HepG2 (cell line): ENCODE measurements at regions of chr6 and their contacts with region 1.

Region 1: DNA sequence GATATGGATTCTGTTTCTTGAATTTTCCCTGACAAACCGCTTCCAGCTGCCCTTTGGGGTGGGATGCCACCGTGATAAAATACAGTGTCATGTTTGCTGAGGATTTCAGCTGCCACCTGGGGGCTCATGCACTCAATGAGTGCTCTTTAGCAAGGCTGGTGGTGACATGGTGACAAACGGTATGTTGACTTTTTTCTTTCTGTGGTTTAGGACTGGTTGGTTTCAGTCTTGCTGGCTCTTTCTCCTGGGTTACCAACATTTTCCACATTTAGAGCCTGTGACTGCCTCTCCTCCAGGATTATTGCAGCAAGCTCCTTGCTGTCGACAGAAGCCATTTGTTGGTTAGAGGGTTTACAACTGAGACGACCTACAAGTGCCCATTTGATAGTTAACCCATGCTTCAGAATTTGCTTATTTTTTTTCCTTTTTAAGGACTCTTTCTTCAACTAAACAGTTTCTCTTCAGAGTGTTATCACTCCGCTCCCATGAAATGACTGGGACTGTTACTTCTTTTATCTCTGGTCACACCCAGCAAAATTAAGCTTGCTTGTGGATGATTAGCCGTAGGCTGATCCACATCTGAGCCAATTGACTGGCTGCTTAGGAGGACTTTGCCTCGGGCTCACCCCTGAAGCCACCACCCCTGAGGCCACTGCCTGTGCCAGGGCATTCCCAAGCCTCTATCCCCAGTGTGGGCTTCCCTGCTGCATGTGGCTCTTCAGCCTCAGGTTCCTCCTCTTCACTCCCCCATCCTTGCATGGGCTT is 48.4 kb upstream of the CDYL start:
- DNase-seq: peak; percentile 69
- ATAC-seq: peak; percentile 85
- H3K4me3 ChIP-seq: no peak overlapping the region
- H3K27ac ChIP-seq: no peak overlapping the region
- H3K4me1 ChIP-seq: peaks cover 15% of the 10 kb centered on the region
- H3K27me3 ChIP-seq: peaks cover 0 to 5% of the 10 kb centered on the region in 2 experiments; a peak in 3 of 5 replicates
- CTCF ChIP-seq: peak; percentile 42
- EP300 ChIP-seq: no peak
- POLR2A ChIP-seq: no peak
- RAD21 ChIP-seq: no peak

Region 2: GRCh38 chr6:4848382-4849068 is 120.7 kb after region 1 on chr6:
- CTCF ChIA-PET with region 1: no interaction called
- POLR2A ChIA-PET with region 1: no interaction called
- in situ Hi-C with region 1: no loop called
- intact Hi-C with region 1: loop called (anchors 5 kb)
- DNase-seq: peak; percentile 62
- ATAC-seq: peak; percentile 93
- H3K4me3 ChIP-seq: no peak overlapping the region
- H3K27ac ChIP-seq: no peak overlapping the region
- H3K4me1 ChIP-seq: peaks cover 10% of the 10 kb centered on the region
- H3K27me3 ChIP-seq: no peaks in the 10 kb centered on the region
- CTCF ChIP-seq: peak; percentile 81
- EP300 ChIP-seq: no peak
- POLR2A ChIP-seq: no peak
- RAD21 ChIP-seq: peak; percentile 79

Region 3: DNA sequence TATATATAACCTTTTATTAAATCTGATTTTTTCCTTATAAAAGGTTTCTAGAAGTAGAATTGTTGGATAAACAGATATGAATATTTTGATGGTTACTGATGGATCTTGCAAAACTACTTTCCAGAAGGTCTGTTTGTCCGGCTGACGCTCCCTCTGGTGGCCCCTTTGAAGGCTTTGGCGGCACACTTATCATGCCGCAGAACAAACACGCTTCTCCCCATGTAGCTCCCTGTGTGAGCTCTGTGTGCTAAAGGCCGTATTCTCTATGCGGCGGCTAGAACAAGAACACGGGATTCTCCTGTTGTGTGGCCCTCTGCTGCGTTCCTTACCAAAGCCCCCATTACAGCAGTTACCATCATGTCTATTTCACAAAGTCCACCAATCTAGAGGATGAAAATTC is 387.3 kb after region 1 on chr6:
- CTCF ChIA-PET with region 1: no interaction called
- POLR2A ChIA-PET with region 1: no interaction called
- in situ Hi-C with region 1: no loop called
- intact Hi-C with region 1: no loop called
- DNase-seq: peak; percentile 91
- ATAC-seq: peak; percentile 94
- H3K4me3 ChIP-seq: no peak overlapping the region
- H3K27ac ChIP-seq: peak overlapping the region; percentile 10
- H3K4me1 ChIP-seq: peaks cover 39% of the 10 kb centered on the region
- H3K27me3 ChIP-seq: no peaks in the 10 kb centered on the region
- CTCF ChIP-seq: peak; percentile 88
- EP300 ChIP-seq: peak in 1 of 2 experiments; percentile 75; a peak in 2 of 4 replicates
- POLR2A ChIP-seq: no peak
- RAD21 ChIP-seq: peak; percentile 88